Posterior vena cava (tissue), 2 donors: ENCODE measurements at regions of chr12 and their contacts with region 1.

Region 1: DNA sequence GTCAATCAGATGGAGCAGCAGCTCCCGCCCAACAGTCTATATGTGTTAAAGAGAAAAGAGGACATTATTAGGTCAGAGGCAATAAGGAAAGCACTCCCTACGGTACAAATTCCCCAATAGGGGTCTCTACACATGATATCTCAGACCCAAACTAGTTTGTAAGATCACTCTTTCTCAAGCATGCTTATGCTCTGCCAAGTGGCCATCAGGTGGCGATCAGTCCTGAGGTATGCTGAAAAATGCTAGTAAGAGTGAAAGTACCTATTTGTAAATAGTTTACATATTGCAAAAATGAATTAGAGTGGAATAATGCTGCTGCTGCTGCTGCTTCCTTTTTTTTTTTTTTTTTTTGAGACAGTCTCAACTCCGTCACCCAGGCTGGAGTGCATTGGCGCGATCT is 61.0 kb downstream of the CPM start:
- DNase-seq: no peak

Region 2: DNA sequence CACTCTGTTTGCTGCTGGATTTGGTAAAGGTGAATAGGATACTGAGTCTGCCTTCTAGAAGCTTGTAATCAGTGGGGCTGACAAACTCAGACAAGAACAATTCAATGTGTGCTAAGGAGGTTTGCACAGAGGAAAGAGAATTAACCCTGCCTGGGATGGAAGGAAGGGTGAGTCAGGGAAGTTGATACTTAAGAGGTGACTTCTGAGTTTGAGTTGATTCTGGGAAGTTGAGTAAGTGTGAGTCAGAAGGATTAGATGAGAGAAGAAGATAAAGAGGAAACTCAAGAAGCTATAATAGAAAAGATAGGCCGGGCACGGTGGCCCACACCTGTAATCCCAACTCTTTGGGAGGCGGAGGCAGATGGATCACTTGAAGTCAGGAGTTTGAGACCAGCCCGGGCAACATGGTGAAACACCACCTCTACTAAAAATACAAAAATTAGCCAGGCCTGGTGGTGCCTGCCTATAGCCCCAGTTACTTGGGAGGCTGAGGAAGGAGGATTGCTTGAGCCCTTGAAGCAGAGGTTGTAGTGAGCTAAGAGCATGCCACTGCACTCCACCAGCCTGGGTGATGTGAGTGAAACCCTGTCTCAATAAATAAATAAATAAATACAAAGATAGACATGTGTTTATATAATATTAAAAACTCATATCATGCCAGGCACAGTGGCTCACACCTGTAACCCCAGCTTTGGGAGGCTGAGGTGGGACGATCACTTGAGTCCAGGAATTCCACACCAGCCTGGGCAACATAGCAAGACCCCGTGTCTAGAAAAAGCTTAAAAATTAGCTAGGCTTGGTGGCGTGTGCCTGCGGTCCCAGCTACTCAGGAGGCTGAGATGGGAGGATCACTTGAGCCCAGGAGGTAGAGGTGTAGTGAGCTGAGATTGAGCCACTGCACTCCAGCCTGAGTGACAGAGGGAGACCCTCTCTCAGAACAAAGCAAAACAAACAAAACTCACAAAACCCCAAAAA is 187.8 kb after region 1 on chr12:
- intact Hi-C with region 1: loop called in 1 of 2 experiments (anchors 10 kb)
- DNase-seq: no peak